Gastrocnemius medialis (tissue), 4 donors: ENCODE measurements at regions of chr9 and their contacts with region 1.

Region 1: DNA sequence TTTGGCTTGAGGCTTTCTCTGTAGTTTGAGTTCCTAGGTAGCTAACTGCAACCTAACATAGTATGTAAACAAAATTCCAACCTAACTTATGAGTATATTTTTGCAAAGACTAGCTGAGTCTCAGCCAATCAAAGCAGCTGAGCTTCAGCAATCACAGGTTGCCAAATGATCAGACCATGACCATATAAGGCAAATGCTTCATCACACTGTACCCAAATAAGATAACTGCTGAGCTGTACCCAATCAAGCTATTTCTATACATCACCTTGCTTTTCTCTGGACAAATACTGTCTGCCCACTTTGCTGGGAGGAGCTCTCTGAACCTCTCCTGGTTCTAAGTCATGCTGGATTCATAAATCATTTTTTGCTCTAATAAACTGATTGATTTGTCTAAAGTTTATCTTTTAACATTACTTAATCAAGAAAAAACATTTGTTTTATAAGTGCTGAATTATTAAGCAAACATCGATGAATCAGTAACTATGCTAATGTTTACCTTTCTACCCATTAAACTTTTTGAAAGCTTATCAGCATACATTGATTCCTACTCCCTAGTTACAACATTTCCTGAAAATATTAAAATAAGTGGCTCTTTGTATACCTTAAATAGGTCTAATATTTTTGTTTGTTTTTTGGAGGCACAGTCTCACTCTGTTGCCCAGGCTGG is 129.7 kb upstream of the PCA3 start:
- DNase-seq: no peak
- ATAC-seq: no peak
- H3K4me3 ChIP-seq: no peak overlapping the region
- H3K27ac ChIP-seq: no peak overlapping the region
- H3K4me1 ChIP-seq: no peaks in the 10 kb centered on the region
- H3K27me3 ChIP-seq: no peaks in the 10 kb centered on the region
- CTCF ChIP-seq: no peak
- POLR2A ChIP-seq: no peak

Region 2: DNA sequence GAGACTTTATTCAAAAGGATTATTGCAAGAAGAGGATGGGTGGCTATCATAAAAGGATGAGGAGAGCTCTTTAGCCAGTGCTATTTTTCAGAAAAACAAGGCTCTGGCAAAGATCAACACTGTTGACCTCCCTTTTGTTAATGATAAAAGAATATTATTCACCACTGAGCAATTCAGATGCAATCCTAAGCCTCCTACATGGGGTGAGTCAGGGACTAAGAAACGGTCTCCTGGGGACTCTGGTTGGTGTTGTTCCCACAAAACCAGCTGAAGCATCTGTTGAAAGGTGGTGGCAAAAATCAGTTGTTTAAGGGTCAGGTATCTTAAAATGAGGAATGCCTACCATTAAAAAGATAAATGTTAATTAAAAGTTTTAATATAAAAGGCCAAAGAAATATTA is 183.3 kb before region 1 on chr9:
- in situ Hi-C with region 1: no loop called
- intact Hi-C with region 1: no loop called
- DNase-seq: no peak
- ATAC-seq: no peak
- H3K4me3 ChIP-seq: no peak overlapping the region
- H3K27ac ChIP-seq: no peak overlapping the region
- H3K4me1 ChIP-seq: no peaks in the 10 kb centered on the region
- H3K27me3 ChIP-seq: no peaks in the 10 kb centered on the region
- CTCF ChIP-seq: no peak
- POLR2A ChIP-seq: no peak

Region 3: GRCh38 chr9:76677481-76678055 is 43.1 kb after region 1 on chr9:
- in situ Hi-C with region 1: no loop called
- intact Hi-C with region 1: no loop called
- DNase-seq: no peak
- ATAC-seq: no peak
- H3K4me3 ChIP-seq: no peak overlapping the region
- H3K27ac ChIP-seq: no peak overlapping the region
- H3K4me1 ChIP-seq: no peaks in the 10 kb centered on the region
- H3K27me3 ChIP-seq: no peaks in the 10 kb centered on the region
- CTCF ChIP-seq: no peak
- POLR2A ChIP-seq: no peak

Region 4: DNA sequence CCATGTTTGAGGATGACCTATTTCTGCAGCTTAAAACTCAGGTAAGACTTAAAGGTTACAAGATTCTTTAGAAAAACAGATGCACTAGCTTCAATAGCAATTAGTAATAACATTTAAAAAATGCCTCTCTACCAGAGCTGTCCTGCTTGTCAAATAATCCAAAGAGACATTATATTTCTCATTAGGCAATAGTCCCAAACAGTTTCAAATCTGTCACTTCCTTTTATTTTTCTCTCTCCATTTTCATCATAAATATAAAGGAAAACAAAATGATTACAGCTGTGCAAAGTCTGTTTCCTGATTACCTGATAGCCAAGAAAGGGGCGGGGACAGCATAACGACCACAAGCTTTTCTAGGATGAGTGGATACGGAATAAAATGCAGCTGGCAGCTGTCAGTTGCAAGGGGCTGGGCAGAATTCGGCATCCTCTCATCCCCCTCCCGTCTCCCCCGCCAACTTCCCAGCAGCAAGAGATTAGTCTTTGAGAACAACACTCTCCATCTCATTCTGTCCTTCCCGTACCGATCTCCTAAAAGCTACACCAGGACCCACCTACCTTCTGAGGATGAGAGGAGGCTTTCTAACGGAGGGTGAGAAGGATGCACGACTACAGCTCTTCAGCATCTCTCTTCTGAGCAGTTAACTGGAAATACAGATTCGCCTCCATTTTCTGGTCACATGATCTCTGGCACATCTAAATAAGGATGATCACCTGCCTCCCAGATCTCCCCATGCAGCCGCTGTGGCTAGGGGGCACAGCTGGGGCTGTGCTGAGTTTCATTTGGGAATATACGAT is 57.2 kb after region 1 on chr9:
- in situ Hi-C with region 1: loop called in 1 of 4 experiments (anchors 10 kb)
- intact Hi-C with region 1: no loop called
- DNase-seq: no peak
- ATAC-seq: no peak
- H3K4me3 ChIP-seq: no peak overlapping the region
- H3K27ac ChIP-seq: no peak overlapping the region
- H3K4me1 ChIP-seq: no peaks in the 10 kb centered on the region
- H3K27me3 ChIP-seq: peaks cover 5 to 18% (median 6%) of the 10 kb centered on the region in 3 donors
- CTCF ChIP-seq: no peak
- POLR2A ChIP-seq: no peak

Region 5: DNA sequence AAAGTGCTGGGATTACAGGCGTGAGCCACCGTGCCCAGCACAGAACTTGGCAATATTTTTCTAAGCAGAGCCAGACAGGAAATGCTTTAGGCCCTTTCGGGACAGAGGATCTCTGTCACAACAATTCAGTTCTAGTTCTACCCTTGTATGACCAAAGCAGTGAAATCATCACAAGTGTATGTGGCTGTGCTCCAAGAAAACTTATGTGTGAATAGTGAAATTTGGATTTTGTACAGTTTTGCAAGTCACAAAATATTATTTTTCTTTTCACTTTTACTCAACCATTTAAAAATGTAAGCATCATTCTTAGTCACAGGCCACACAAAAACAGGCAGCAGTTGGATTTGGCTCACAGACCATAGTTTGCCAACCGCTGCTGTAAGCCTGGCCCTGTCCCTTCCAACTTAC is 291.8 kb after region 1 on chr9:
- in situ Hi-C with region 1: no loop called
- intact Hi-C with region 1: no loop called
- DNase-seq: no peak
- ATAC-seq: no peak
- H3K4me3 ChIP-seq: no peak overlapping the region
- H3K27ac ChIP-seq: no peak overlapping the region
- H3K4me1 ChIP-seq: no peaks in the 10 kb centered on the region
- H3K27me3 ChIP-seq: no peaks in the 10 kb centered on the region
- CTCF ChIP-seq: no peak
- POLR2A ChIP-seq: no peak